ENCODE measurements at regions of chr20 and their contacts with region 1.

Region 1: DNA sequence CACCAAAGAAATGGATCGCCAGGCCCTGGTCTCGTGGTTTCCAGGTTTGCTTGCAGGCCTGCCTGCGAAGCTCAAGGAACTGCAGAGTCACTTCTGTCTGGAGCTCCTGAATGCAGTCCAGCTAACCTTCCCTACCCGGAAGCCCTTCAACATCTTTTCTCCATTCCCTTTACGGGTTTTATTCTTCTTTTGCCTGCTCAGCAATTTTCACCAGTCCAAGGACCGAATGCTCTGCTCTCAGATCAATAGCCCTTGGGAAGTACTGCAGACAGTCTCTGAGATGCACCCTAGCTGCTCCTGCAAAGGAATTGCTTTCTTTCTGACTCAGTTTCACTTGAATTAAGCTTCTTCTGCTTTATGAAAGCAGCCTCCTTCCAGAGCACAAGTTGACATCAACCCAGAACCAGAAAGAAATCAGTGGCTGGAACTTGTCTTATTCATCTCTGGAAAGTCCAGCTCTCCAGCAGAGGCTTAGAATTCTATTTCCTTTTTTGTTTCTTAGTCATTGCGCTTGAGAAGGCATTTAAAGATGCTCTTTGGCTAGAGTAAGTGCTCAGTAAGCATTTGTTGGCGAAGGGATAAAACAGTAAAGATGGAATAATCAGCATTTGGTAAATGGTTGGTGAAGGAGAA is 18.7 kb upstream of the YWHAB start:
- H3K4me3 ChIP-seq: no peak overlapping the region
- H3K27ac ChIP-seq: no peak overlapping the region
- H3K4me1 ChIP-seq: no peaks in the 10 kb centered on the region
- CTCF ChIP-seq: no peak

Region 2: GRCh38 chr20:44800398-44801046 is 66.3 kb before region 1 on chr20:
- CTCF ChIA-PET with region 1: interaction called, 14 read pairs
- POLR2A ChIA-PET with region 1: interaction called, 3 read pairs
- H3K4me3 ChIP-seq: no peak overlapping the region
- H3K27ac ChIP-seq: no peak overlapping the region
- H3K4me1 ChIP-seq: no peaks in the 10 kb centered on the region
- CTCF ChIP-seq: 0 out of 2 replicates have a peak, but pooled peaks have one; percentile 28

Measured in HEK293 (cell line).